Activated naive CD4-positive, alpha-beta T cell treated with anti-CD3 and anti-CD28 coated beads for 36 hours (primary cell): ENCODE measurements at regions of chr10 and their contacts with region 1.

Region 1: DNA sequence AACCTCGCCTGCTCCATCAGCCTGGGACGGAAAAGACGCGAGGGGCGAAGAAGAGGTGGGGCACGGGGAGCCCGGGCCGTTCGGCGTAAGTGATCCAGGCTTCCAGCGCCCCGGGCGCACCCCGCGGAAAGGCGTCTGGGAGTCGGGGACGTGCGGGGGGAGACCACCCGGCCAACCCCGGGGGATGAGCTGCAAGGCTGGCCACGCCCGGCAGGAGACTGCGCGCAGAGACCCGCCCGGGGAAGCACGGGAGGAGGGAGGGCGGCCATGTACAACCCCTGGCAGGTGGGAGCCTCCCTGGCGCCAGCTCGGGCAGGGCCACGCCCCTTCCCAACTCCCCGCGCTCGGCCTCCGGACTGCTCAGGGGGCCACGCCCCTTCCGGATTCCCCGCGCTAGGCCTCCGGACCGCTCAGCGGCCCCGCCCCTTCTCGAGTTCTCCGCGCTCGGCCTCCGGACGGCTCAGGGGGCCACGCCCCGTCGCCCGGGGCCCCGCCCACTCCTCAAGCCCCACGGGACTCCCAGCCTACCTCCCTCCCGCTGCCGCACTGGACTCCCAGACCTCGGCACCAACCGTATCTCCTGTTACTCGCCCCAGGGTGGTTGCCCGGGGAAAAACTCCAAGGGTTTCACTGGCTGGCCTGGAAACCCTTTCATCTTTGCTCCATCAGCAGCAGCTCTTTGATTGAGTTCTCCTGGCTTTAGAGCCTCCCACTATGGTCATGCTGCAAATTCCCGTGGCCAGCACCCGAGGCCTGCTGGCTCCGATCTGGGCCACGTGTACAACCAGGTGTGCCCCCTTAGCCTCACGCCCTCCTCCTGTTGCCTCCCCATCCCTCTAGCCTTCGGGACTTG is 284.4 kb downstream of the ZEB1 start:
- DNase-seq: peak; percentile 92
- H3K4me3 Mint-ChIP-seq: peak overlapping the region; percentile 86
- H3K27ac Mint-ChIP-seq: peak overlapping the region; percentile 58
- H3K4me1 Mint-ChIP-seq: peaks cover 31% of the 10 kb centered on the region
- H3K27me3 Mint-ChIP-seq: peaks cover 2% of the 10 kb centered on the region

Region 2: DNA sequence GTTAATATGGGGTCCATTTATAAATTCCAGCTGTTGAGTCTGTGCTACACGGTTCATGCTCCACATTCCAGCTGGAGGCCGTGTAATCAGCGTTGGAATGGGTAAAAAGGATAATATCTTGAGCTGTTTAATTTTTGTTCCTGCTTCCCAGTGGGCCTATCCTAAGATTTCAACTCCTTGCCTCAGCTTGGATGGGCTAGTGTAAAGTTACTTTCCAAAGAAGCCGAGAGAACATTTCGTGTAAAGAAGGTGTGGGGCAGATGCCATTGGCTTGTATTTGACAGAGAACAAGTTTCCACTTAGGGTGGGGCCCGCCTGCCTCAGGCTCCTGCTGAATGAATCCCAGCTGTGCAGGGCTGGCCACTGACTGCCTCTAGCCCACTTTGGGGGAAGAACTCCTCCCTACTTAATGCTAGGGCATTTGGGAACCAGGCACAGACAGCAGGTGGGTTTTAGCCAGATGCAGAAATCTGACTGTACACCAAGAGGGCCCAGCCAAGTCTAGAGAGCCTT is 848.0 kb before region 1 on chr10:
- CTCF ChIA-PET with region 1: no interaction called
- intact Hi-C with region 1: no loop called
- DNase-seq: no peak
- H3K4me3 Mint-ChIP-seq: no peak overlapping the region
- H3K27ac Mint-ChIP-seq: no peak overlapping the region
- H3K4me1 Mint-ChIP-seq: peaks cover 12% of the 10 kb centered on the region
- H3K27me3 Mint-ChIP-seq: no peaks in the 10 kb centered on the region

Region 3: DNA sequence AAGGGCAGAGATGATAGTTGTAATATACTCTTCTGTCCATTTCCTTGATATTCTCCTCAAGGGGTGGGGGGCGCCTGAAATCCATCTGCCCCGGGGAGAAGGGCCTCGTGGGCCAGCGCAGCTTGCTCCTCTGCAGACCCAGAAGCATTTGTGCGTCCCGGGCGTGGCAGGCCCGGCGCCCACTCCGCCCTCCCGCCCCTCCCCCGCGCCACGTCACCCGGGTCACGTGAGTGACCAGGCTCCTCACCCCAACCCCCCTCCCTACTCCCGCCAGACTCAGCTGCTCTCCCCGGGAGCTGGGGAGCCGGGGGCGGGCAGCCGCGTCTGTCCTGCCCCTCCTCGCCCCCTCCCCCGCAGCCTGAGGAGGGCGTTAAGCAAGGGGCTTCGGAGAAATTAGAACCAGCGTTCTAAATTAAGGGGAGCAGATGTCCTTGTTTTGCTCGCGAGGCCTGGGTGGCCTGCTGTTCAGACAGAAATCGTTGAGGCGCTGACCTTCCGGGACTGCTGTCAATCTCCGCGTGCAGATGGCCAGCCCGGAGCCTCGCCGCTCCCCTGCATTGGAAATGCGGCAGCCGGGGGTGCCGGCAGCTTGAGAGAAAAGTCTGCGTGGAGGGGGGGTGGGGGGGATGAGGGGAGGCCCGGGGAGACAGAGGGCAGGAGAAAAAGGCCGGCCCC is 469.7 kb before region 1 on chr10:
- CTCF ChIA-PET with region 1: no interaction called
- intact Hi-C with region 1: loop called (anchors 5 kb)
- DNase-seq: peak; percentile 76
- H3K4me3 Mint-ChIP-seq: peak overlapping the region; percentile 68
- H3K27ac Mint-ChIP-seq: no peak overlapping the region
- H3K4me1 Mint-ChIP-seq: peaks cover 37% of the 10 kb centered on the region
- H3K27me3 Mint-ChIP-seq: no peaks in the 10 kb centered on the region

Region 4: GRCh38 chr10:31574577-31574976 is 28.9 kb before region 1 on chr10:
- CTCF ChIA-PET with region 1: no interaction called
- intact Hi-C with region 1: no loop called
- DNase-seq: no peak
- H3K4me3 Mint-ChIP-seq: no peak overlapping the region
- H3K27ac Mint-ChIP-seq: no peak overlapping the region
- H3K4me1 Mint-ChIP-seq: peaks cover 8% of the 10 kb centered on the region
- H3K27me3 Mint-ChIP-seq: peaks cover 2% of the 10 kb centered on the region

Region 5: GRCh38 chr10:31630861-31631567 is 27.6 kb after region 1 on chr10:
- CTCF ChIA-PET with region 1: no interaction called
- intact Hi-C with region 1: no loop called
- DNase-seq: no peak
- H3K4me3 Mint-ChIP-seq: no peak overlapping the region
- H3K27ac Mint-ChIP-seq: no peak overlapping the region
- H3K4me1 Mint-ChIP-seq: no peaks in the 10 kb centered on the region
- H3K27me3 Mint-ChIP-seq: peaks cover 5% of the 10 kb centered on the region

Region 6: GRCh38 chr10:31745612-31746376 is 142.3 kb after region 1 on chr10:
- CTCF ChIA-PET with region 1: no interaction called
- intact Hi-C with region 1: loop called (anchors 1 kb)
- DNase-seq: peak; percentile 84
- H3K4me3 Mint-ChIP-seq: no peak overlapping the region
- H3K27ac Mint-ChIP-seq: peak overlapping the region; percentile 95
- H3K4me1 Mint-ChIP-seq: peaks cover 47% of the 10 kb centered on the region
- H3K27me3 Mint-ChIP-seq: no peaks in the 10 kb centered on the region

Region 7: GRCh38 chr10:31808258-31809218 is 205.1 kb after region 1 on chr10:
- CTCF ChIA-PET with region 1: interaction called, 3 read pairs
- intact Hi-C with region 1: loop called (anchors 5 kb)
- DNase-seq: peak; percentile 24
- H3K4me3 Mint-ChIP-seq: peak overlapping the region; percentile 57
- H3K27ac Mint-ChIP-seq: peak overlapping the region; percentile 77
- H3K4me1 Mint-ChIP-seq: peaks cover 6% of the 10 kb centered on the region
- H3K27me3 Mint-ChIP-seq: no peaks in the 10 kb centered on the region